ENCODE measurements at regions of chr17 and their contacts with region 1.

Region 1: GRCh38 chr17:81579821-81580321 is 27.7 kb upstream of the FAAP100 start:
- DNase-seq: no peak
- ATAC-seq: no peak
- H3K4me3 Mint-ChIP-seq: no peak overlapping the region
- H3K27ac Mint-ChIP-seq: peak overlapping the region; percentile 35
- H3K4me1 Mint-ChIP-seq: peaks cover 2% of the 10 kb centered on the region
- H3K27me3 Mint-ChIP-seq: no peaks in the 10 kb centered on the region

Region 2: GRCh38 chr17:81512560-81513371 is 67.1 kb before region 1 on chr17 and contains the start of gene ACTG1:
- POLR2A ChIA-PET with region 1: no interaction called
- DNase-seq: peak; percentile 93
- ATAC-seq: peak; percentile 49
- H3K4me3 Mint-ChIP-seq: peak within 1 kb of the TSS; percentile 93
- H3K27ac Mint-ChIP-seq: peak within 1 kb of the TSS; percentile 90
- H3K4me1 Mint-ChIP-seq: peaks cover 28% of the 10 kb centered on the region
- H3K27me3 Mint-ChIP-seq: no peaks in the 10 kb centered on the region
- total RNA-seq, gene ACTG1: 2,936 to 3,174 TPM

Region 3: GRCh38 chr17:81545160-81545949 is 34.5 kb before region 1 on chr17:
- POLR2A ChIA-PET with region 1: no interaction called
- DNase-seq: no peak
- ATAC-seq: no peak
- H3K4me3 Mint-ChIP-seq: no peak overlapping the region
- H3K27ac Mint-ChIP-seq: no peak overlapping the region
- H3K4me1 Mint-ChIP-seq: peaks cover 1% of the 10 kb centered on the region
- H3K27me3 Mint-ChIP-seq: no peaks in the 10 kb centered on the region

Region 4: DNA sequence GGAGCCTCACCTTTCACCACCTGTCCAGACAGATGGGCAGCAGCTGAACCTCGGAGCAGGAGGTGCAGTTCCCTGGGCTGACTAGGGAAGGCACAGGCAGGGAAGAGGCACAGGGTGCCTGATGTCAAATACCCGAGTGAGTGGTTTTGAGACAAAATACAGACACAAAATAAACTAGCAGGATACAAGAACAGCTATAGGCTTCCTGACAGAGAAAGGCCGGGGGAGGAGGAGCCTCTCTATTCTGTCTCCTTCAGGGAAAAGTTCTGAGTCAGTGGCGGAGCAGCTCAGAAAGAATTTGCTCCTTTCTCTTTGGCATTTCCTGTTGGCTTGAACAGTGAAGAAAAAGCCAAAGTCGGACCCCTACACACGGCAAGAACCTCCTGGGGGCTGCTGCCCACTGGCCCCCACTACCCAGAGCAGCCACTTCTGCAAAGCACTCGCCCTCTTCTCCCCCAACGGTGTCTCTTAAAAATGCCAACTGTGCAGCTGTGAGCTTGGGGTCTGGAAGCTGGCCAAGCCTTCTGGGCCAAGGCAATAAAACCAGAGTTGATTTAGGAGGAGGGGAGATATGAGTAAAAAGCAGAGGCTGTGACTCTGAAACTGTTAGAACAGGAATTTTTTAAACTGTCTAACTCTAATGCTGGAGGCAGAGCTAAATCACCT is 13.3 kb before region 1 on chr17:
- POLR2A ChIA-PET with region 1: interaction called, 11 read pairs
- DNase-seq: no peak
- ATAC-seq: no peak
- H3K4me3 Mint-ChIP-seq: no peak overlapping the region
- H3K27ac Mint-ChIP-seq: no peak overlapping the region
- H3K4me1 Mint-ChIP-seq: no peaks in the 10 kb centered on the region
- H3K27me3 Mint-ChIP-seq: no peaks in the 10 kb centered on the region